CD4-positive, alpha-beta memory T cell (primary cell): ENCODE measurements at regions of chr2 and their contacts with region 1.

Region 1: DNA sequence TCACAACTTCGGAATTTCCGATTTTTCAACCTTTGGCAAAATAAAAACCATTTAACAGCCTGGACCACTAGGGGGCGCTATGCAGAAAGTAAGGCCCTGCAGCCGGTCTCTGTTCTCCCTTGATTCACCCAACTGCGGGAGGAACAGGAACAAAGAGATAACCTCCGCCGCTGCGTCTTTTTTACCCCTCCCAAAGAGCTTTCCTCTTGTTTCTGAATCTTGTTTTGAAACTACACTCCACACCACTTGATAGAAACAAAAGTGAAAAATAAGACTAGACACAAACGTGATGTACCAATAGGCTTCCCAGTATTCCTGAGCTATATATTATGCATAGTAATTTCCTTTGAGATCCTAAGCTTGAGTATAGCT is 231.2 kb downstream of the MYO3B start:
- DNase-seq: peak; percentile 52 to 69 (median 62)
- H3K4me3 ChIP-seq: no peak overlapping the region
- H3K4me3 Mint-ChIP-seq: peak overlapping the region; percentile 2 to 79 (median 52)
- H3K27ac ChIP-seq: no peak overlapping the region
- H3K27ac Mint-ChIP-seq: peak overlapping the region in 2 of 7 donors; percentile 27 to 91
- H3K4me1 ChIP-seq: peaks cover 7% of the 10 kb centered on the region
- H3K4me1 Mint-ChIP-seq: peaks cover 3 to 7% (median 6%) of the 10 kb centered on the region in 4 donors
- H3K27me3 ChIP-seq: peaks cover 13% of the 10 kb centered on the region
- H3K27me3 Mint-ChIP-seq: peaks cover 17 to 33% of the 10 kb centered on the region in 2 donors

Region 2: DNA sequence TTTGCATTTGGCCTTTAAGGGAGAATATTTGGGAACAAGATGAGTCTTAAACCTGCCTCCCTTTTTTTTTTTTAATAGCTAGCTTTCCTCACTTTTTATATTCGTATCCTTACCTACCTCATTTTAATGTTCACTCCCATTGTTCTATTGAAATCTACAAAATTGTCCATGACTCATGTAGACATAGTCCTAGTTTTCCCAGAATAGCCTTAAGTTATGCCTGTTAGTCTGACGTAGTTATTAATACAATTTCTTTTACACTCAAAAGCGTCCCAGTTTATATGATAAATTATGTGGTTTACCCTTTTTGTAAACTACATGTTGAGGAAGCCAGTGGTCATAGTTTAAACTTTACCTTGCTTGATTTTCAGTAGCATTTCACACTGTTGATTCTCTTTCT is 508.5 kb before region 1 on chr2:
- CTCF ChIA-PET with region 1: no interaction called
- POLR2A ChIA-PET with region 1: no interaction called
- intact Hi-C with region 1: no loop called
- DNase-seq: no peak
- H3K4me3 ChIP-seq: no peak overlapping the region
- H3K4me3 Mint-ChIP-seq: no peak overlapping the region
- H3K27ac ChIP-seq: no peak overlapping the region
- H3K27ac Mint-ChIP-seq: peak overlapping the region in 1 of 7 donors; percentile 61
- H3K4me1 ChIP-seq: no peaks in the 10 kb centered on the region
- H3K4me1 Mint-ChIP-seq: peaks cover 4 to 10% (median 7%) of the 10 kb centered on the region in 4 donors
- H3K27me3 ChIP-seq: no peaks in the 10 kb centered on the region
- H3K27me3 Mint-ChIP-seq: no peaks in the 10 kb centered on the region

Region 3: GRCh38 chr2:170332676-170333402 is 76.3 kb before region 1 on chr2:
- CTCF ChIA-PET with region 1: no interaction called
- POLR2A ChIA-PET with region 1: no interaction called
- intact Hi-C with region 1: no loop called
- DNase-seq: no peak
- H3K4me3 ChIP-seq: no peak overlapping the region
- H3K4me3 Mint-ChIP-seq: no peak overlapping the region
- H3K27ac ChIP-seq: no peak overlapping the region
- H3K27ac Mint-ChIP-seq: no peak overlapping the region
- H3K4me1 ChIP-seq: no peaks in the 10 kb centered on the region
- H3K4me1 Mint-ChIP-seq: no peaks in the 10 kb centered on the region
- H3K27me3 ChIP-seq: no peaks in the 10 kb centered on the region
- H3K27me3 Mint-ChIP-seq: peaks cover 8 to 18% of the 10 kb centered on the region in 2 donors

Region 4: GRCh38 chr2:170377500-170378207 is 31.5 kb before region 1 on chr2:
- CTCF ChIA-PET with region 1: interaction called, 14 read pairs
- POLR2A ChIA-PET with region 1: no interaction called
- intact Hi-C with region 1: no loop called
- DNase-seq: no peak
- H3K4me3 ChIP-seq: no peak overlapping the region
- H3K4me3 Mint-ChIP-seq: no peak overlapping the region
- H3K27ac ChIP-seq: no peak overlapping the region
- H3K27ac Mint-ChIP-seq: no peak overlapping the region
- H3K4me1 ChIP-seq: no peaks in the 10 kb centered on the region
- H3K4me1 Mint-ChIP-seq: no peaks in the 10 kb centered on the region
- H3K27me3 ChIP-seq: no peaks in the 10 kb centered on the region
- H3K27me3 Mint-ChIP-seq: peaks cover 21 to 25% of the 10 kb centered on the region in 2 donors

Region 5: GRCh38 chr2:170396799-170397459 is 12.2 kb before region 1 on chr2:
- CTCF ChIA-PET with region 1: interaction called, 14 read pairs
- POLR2A ChIA-PET with region 1: no interaction called
- intact Hi-C with region 1: no loop called
- DNase-seq: no peak
- H3K4me3 ChIP-seq: no peak overlapping the region
- H3K4me3 Mint-ChIP-seq: no peak overlapping the region
- H3K27ac ChIP-seq: no peak overlapping the region
- H3K27ac Mint-ChIP-seq: no peak overlapping the region
- H3K4me1 ChIP-seq: no peaks in the 10 kb centered on the region
- H3K4me1 Mint-ChIP-seq: no peaks in the 10 kb centered on the region
- H3K27me3 ChIP-seq: no peaks in the 10 kb centered on the region
- H3K27me3 Mint-ChIP-seq: peaks cover 29 to 31% of the 10 kb centered on the region in 2 donors

Region 6: GRCh38 chr2:170715062-170715931 is 306.1 kb after region 1 on chr2 and contains the start of gene SP5:
- CTCF ChIA-PET with region 1: interaction called, 4 read pairs
- POLR2A ChIA-PET with region 1: no interaction called
- intact Hi-C with region 1: loop called (anchors 5 kb)
- DNase-seq: peak; percentile 45 to 65 (median 56)
- H3K4me3 ChIP-seq: peak within 1 kb of the TSS; percentile 44 to 69
- H3K4me3 Mint-ChIP-seq: peak within 1 kb of the TSS; percentile 84 to 95 (median 93)
- H3K27ac ChIP-seq: no peak within 1 kb of the TSS
- H3K27ac Mint-ChIP-seq: peak within 1 kb of the TSS in 4 of 7 donors; percentile 26 to 87 (median 54)
- H3K4me1 ChIP-seq: peaks cover 40% of the 10 kb centered on the region
- H3K4me1 Mint-ChIP-seq: peaks cover 17 to 45% (median 36%) of the 10 kb centered on the region in 4 donors
- H3K27me3 ChIP-seq: peaks cover 45% of the 10 kb centered on the region
- H3K27me3 Mint-ChIP-seq: peaks cover 47 to 52% of the 10 kb centered on the region in 2 donors
- total RNA-seq, gene SP5: not detected